ENCODE measurements at regions of chr4 and their contacts with region 1.

Region 1: DNA sequence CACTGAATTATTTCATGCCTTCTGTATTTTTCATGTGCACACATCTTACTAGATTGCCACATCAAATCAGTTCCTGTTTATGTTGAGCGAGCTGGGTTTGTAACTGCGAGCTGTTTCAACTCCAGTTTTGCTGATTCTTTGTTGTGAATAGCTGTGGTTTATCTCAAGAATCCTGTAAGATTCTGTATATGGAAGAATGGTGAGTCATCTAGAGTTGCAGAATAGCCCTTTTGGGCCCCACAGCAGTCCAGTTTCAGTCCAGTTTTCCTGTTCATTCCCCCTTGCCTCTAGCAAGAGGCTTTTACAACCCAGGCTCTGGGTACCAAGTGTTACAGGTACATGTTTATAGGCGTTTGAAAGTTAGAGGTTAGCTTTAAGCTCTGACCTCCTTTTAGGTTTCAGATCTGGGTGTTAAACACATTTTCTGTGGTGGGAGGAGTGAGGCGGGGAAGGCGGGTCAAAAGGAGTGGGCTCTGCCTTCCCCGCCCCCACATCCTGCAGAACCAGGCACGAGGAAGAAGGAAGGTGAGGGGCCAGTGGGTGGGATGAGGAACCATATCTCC is 32.7 kb downstream of the TBC1D14 start:
- DNase-seq: peak in 1 of 2 donors; percentile 71
- ATAC-seq: peak; percentile 63 to 80 (median 70)
- H3K4me3 ChIP-seq: no peak overlapping the region
- H3K4me3 Mint-ChIP-seq: peak overlapping the region; percentile 90
- H3K27ac ChIP-seq: peak overlapping the region; percentile 63
- H3K27ac Mint-ChIP-seq: peak overlapping the region; percentile 88 to 91
- H3K4me1 ChIP-seq: peaks cover 73% of the 10 kb centered on the region
- H3K4me1 Mint-ChIP-seq: peaks cover 60 to 74% of the 10 kb centered on the region in 2 donors
- H3K27me3 ChIP-seq: no peaks in the 10 kb centered on the region
- H3K27me3 Mint-ChIP-seq: no peaks in the 10 kb centered on the region
- CTCF ChIP-seq: no peak

Region 2: GRCh38 chr4:6909073-6909965 is 33.0 kb before region 1 on chr4 and contains the start of gene TBC1D14:
- intact Hi-C with region 1: loop called (anchors 5 kb)
- DNase-seq: peak; percentile 83 to 91
- ATAC-seq: peak; percentile 88 to 96 (median 89)
- H3K4me3 ChIP-seq: peak within 1 kb of the TSS; percentile 75
- H3K4me3 Mint-ChIP-seq: peak within 1 kb of the TSS; percentile 94
- H3K27ac ChIP-seq: peak within 1 kb of the TSS; percentile 99
- H3K27ac Mint-ChIP-seq: peak within 1 kb of the TSS; percentile 83 to 90
- H3K4me1 ChIP-seq: peaks cover 39% of the 10 kb centered on the region
- H3K4me1 Mint-ChIP-seq: peaks cover 33 to 44% of the 10 kb centered on the region in 2 donors
- H3K27me3 ChIP-seq: no peaks in the 10 kb centered on the region
- H3K27me3 Mint-ChIP-seq: no peaks in the 10 kb centered on the region
- CTCF ChIP-seq: no peak
- total RNA-seq, gene TBC1D14: 36.0 to 54.7 (median 53.2) TPM

Region 3: DNA sequence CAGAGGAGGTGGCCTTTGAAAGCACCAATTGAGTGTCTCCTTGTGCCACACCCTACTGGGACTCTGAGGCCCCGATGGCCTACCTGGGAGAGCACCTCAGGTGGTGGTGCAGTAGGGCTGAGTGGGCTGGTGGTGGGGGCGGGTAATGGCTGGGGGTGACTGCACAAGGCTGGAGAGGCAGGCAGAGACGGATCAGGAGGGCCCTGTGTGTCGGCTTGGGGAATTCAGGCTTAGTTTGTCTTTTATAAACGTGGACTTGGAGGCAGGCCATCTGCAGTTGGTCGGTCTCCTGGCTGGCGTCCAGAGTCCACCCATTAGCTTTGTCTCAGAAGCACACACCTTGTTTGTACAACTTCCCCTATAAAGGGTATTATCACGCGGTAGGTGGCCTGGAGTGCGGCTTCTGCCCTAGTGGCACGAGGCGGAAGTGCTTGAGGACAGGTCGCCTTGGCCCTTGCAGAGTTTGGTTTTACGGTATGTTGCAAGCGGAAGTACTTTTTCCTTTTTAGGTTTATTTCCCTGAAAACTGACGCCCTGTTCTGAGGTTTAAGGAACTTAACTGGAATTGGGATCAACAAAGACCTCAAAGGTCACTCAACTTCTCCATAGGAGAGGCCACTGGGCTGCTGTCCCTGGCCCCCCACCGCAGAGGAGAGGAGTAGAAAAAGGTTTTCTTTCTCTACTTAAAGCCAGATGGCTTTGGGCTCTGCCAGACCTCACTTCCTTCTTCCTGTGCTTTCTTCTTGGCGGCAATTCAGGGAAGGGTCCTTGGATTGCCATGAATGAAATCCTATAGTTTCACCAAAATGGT is 24.7 kb before region 1 on chr4:
- intact Hi-C with region 1: loop called (anchors 2 kb)
- DNase-seq: peak; percentile 42 to 68
- ATAC-seq: peak; percentile 68 to 85 (median 83)
- H3K4me3 ChIP-seq: no peak overlapping the region
- H3K4me3 Mint-ChIP-seq: peak overlapping the region; percentile 78
- H3K27ac ChIP-seq: peak overlapping the region; percentile 51
- H3K27ac Mint-ChIP-seq: peak overlapping the region; percentile 91
- H3K4me1 ChIP-seq: peaks cover 60% of the 10 kb centered on the region
- H3K4me1 Mint-ChIP-seq: peaks cover 53 to 69% of the 10 kb centered on the region in 2 donors
- H3K27me3 ChIP-seq: no peaks in the 10 kb centered on the region
- H3K27me3 Mint-ChIP-seq: no peaks in the 10 kb centered on the region
- CTCF ChIP-seq: peak; percentile 67